Heart right ventricle (tissue), 16 donors: ENCODE measurements at regions of chr16 and their contacts with region 1.

Region 1: GRCh38 chr16:6672507-6672906 is 660.1 kb upstream of the RBFOX1 start:
- DNase-seq: no peak
- ATAC-seq: no peak
- H3K4me3 ChIP-seq: no peak overlapping the region
- H3K27ac ChIP-seq: no peak overlapping the region
- H3K4me1 ChIP-seq: no peaks in the 10 kb centered on the region
- H3K27me3 ChIP-seq: peaks cover 0 to 4% (median 0%) of the 10 kb centered on the region in 7 donors
- CTCF ChIP-seq: no peak

Region 2: DNA sequence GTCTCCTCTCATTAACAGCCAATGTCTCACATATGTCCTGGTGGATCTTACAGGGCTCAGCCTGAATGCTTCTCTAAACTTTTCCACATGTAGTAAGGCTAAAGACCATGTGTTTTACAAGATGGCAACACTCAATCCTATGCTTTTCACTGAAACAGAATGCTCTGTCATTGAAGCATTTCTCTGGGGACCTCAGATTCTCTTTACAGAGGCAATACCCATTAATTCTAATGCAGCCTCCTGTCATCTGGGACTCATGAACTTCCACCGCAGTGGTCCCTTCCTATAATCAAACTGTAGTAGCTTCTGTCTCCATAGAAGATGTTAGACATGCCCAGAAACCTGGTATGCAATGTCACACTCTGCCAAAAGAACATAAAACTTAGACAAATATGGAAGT is 266.5 kb before region 1 on chr16:
- intact Hi-C with region 1: no loop called
- DNase-seq: no peak
- ATAC-seq: no peak
- H3K4me3 ChIP-seq: no peak overlapping the region
- H3K27ac ChIP-seq: no peak overlapping the region
- H3K4me1 ChIP-seq: no peaks in the 10 kb centered on the region
- H3K27me3 ChIP-seq: peaks cover 0 to 5% (median 0%) of the 10 kb centered on the region in 7 donors
- CTCF ChIP-seq: no peak

Region 3: DNA sequence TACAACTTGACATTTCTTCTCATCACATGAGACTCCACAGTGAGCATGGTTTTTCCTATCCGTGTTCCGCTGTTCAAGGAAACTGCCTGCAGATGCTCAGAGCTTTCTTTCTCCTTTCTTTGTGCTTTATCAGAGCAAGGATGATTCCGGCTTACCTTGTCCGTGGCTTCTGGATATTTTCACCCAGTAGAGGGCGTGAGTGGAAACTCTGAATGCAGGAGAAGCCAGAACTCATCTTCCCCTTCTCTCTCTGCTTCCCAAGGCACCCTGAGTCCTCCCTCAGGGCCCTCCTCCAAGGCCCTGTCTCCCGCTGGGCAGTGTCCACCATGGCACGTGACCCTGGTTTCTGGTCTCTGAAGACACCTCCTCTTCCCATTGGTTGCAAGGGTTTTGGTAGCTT is 61.0 kb before region 1 on chr16:
- intact Hi-C with region 1: loop called in 1 of 10 experiments (anchors 10 kb)
- DNase-seq: no peak
- ATAC-seq: no peak
- H3K4me3 ChIP-seq: no peak overlapping the region
- H3K27ac ChIP-seq: no peak overlapping the region
- H3K4me1 ChIP-seq: no peaks in the 10 kb centered on the region
- H3K27me3 ChIP-seq: peaks cover 0 to 6% (median 0%) of the 10 kb centered on the region in 7 donors
- CTCF ChIP-seq: no peak

Region 4: DNA sequence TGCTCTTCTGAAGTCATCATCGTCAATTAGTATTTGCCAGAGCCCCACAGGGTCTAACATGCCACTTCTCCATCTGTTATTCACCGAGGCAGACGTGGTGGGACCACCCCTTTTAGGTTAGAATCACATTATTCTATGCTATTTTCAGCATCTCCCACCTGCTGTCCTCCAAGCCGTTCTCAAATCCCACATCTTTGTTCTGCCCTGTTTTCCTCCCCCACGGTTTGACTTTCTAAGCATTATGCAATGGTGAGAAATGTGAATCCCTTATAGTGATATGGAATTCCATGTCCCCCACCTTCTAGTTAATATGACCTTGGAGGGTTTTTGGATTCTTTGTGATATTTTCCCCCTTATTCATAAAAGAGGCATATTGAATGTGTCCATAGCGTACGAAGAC is 26.0 kb after region 1 on chr16:
- intact Hi-C with region 1: loop called in 1 of 10 experiments (anchors 1 kb)
- DNase-seq: no peak
- ATAC-seq: no peak
- H3K4me3 ChIP-seq: no peak overlapping the region
- H3K27ac ChIP-seq: no peak overlapping the region
- H3K4me1 ChIP-seq: no peaks in the 10 kb centered on the region
- H3K27me3 ChIP-seq: no peaks in the 10 kb centered on the region
- CTCF ChIP-seq: no peak

Region 5: GRCh38 chr16:6714510-6714909 is 42.0 kb after region 1 on chr16:
- intact Hi-C with region 1: no loop called
- DNase-seq: no peak
- ATAC-seq: no peak
- H3K4me3 ChIP-seq: no peak overlapping the region
- H3K27ac ChIP-seq: no peak overlapping the region
- H3K4me1 ChIP-seq: no peaks in the 10 kb centered on the region
- H3K27me3 ChIP-seq: no peaks in the 10 kb centered on the region
- CTCF ChIP-seq: no peak